Tibial artery (tissue), 4 donors: ENCODE measurements at regions of chr3 and their contacts with region 1.

Region 1: DNA sequence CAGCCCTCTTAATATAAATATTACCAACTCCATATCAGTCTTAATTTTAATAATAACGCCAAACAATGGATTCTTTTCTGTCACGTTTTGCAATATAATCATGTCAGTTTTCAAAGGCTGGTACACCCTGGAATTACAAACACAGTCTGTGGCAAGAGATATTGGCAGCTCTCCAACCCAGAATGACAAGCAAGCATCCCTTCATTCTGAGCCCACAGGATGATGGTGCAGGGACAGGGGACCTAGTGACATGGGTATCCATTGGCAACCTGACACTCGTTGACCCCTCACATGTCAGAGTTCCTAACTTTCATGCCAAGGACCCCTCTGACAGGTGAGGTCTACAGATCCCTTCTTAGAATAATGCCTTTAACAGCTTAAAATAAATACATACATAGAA is 154.5 kb upstream of the TSC22D2 start:
- DNase-seq: no peak
- H3K4me3 ChIP-seq: no peak overlapping the region
- H3K27ac ChIP-seq: peak overlapping the region; percentile 49 to 62
- H3K4me1 ChIP-seq: peaks cover 0 to 61% (median 30%) of the 10 kb centered on the region in 4 donors
- H3K27me3 ChIP-seq: no peaks in the 10 kb centered on the region
- CTCF ChIP-seq: no peak

Region 2: DNA sequence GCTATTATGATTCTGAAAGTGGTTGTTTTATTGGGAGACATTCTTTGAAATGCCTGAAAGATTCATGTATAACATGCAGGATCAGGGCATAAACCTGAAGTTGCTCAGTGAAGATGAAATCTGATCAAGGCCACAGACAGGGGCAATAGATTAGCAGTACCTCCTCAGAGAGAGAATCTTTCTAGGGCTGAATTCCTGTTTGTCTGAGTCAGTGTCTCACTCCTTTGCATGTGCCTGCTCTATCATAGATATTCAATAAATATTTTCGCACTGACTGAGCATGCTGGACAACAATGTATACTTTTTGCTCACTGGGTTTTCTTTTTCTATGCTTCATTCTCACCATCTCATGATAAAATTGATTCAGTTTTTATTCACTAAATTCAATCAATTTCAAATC is 233.1 kb before region 1 on chr3:
- intact Hi-C with region 1: no loop called
- DNase-seq: no peak
- H3K4me3 ChIP-seq: no peak overlapping the region
- H3K27ac ChIP-seq: no peak overlapping the region
- H3K4me1 ChIP-seq: peaks cover 0 to 13% (median 0%) of the 10 kb centered on the region in 4 donors
- H3K27me3 ChIP-seq: no peaks in the 10 kb centered on the region
- CTCF ChIP-seq: no peak

Region 3: DNA sequence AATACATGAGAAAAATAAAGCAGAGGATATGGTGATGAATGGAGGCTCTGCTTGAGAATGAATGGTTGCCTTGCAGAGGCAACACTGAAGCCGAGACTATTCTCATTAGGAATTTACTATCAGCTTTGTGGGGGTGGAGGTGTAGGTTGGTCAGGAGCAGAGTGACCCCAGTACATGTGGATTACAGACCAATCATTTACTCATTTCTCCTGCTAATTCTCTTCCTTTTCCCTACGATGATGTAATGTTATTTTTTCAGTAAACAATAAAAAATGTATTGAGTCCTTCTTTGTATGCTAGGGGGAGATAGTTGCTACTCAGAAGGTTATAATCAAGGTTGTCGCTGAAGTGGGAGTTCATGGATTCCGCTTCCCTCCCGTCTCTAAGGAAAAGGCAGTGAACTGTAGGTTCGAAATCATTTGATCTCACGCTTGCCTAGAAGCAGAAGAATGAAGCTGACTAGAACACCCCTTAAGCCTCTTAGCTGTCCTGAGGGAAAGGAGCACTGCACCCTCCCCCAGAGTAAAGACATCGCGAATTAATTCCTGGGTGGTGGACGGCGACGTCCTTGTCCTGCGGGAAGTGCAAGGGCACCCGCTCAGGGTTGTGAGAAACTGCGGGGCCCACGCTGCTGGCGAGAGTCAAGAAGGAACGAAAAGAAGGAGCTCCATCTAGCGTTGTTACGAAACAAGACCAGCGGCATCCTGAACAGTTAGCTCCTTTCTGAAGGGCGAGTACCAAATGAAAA is 69.8 kb before region 1 on chr3:
- intact Hi-C with region 1: no loop called
- DNase-seq: peak; percentile 56 to 80
- H3K4me3 ChIP-seq: peak overlapping the region; percentile 35 to 41
- H3K27ac ChIP-seq: peak overlapping the region; percentile 10 to 28
- H3K4me1 ChIP-seq: peaks cover 0 to 13% (median 3%) of the 10 kb centered on the region in 4 donors
- H3K27me3 ChIP-seq: no peaks in the 10 kb centered on the region
- CTCF ChIP-seq: peak; percentile 58 to 68

Region 4: GRCh38 chr3:150348500-150348899 is 94.9 kb after region 1 on chr3:
- intact Hi-C with region 1: loop called (anchors 10 kb)
- DNase-seq: no peak
- H3K4me3 ChIP-seq: no peak overlapping the region
- H3K27ac ChIP-seq: peak overlapping the region; percentile 53 to 67
- H3K4me1 ChIP-seq: peaks cover 0 to 41% (median 33%) of the 10 kb centered on the region in 4 donors
- H3K27me3 ChIP-seq: no peaks in the 10 kb centered on the region
- CTCF ChIP-seq: no peak